ENCODE measurements at regions of chr1 and their contacts with region 1.

Region 1: DNA sequence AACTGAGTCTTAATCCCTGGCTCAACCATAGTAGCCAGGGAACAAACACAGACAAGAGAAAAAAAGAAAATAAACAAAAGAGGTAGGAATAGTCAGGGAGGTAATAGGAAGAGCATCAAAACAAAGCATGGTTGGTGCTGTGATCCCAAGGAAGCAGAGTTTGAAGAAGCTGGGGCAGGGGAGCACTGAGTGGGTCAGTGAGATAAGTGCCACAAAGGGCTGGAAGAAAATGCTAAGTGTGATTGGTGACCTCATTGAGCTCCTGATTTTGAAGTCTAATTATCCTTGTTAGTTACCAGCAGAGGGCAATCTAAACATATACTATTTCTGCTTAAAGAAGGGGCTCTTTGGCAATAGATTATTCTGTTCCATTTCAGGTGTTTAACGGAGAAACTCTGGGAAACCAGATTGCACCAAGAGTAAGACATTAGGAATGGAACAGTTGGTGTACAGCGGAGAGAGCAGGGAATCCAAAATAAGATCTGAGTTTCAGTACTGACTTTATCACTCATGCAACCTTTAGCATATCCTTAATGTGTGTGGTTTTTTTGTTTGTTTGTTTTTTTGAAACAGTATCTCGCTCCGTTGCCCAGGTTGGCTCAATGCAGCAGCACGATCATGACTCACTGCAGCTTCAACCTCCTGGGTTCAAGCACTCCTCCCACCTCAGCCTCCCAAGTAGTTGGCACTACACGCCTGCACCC is 30.7 kb upstream of the KIAA1614 start:
- DNase-seq: peak; percentile 63
- H3K4me3 ChIP-seq: no peak overlapping the region
- H3K27ac ChIP-seq: no peak overlapping the region
- H3K4me1 ChIP-seq: no peaks in the 10 kb centered on the region
- H3K27me3 ChIP-seq: no peaks in the 10 kb centered on the region
- CTCF ChIP-seq: peak; percentile 55

Region 2: DNA sequence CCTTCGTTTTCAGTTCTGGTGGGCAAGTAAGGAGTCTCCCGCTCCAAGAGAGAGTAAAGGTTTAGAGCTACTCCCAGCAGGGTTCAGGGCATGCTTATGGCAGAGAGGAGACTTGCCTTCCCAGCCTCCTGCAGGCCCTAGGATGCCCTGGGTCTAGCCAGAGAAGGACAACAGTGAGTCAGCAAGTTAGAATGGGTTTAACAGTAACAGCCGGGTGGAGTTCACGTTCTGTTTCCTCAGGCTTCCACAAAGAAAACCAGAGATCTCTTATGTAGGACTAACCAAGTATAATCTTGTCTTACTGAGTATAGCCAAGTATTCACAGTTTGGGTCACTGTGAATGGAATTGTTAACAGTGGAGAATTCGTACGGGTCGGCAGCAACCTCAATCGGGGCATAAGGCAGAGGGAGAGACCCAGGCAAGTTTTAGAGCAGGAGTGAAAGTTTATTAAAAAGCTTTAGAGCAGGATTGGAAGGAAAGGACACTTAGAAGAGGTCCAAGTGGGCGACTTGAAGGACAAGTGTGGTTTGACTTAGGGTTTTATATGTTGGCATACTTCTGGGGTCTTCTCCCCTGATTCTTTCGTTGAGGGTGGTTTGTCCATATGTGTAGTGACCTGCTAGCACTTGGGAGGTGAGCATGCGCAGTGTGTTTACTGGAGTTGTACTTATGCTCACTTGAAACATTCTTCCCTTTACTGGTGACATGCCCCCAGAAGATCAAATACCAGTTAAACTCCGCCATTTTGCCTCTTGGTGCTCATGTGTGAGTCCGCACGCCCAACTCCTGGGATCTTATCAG is 318.7 kb before region 1 on chr1:
- CTCF ChIA-PET with region 1: no interaction called
- POLR2A ChIA-PET with region 1: no interaction called
- intact Hi-C with region 1: no loop called
- DNase-seq: no peak
- H3K4me3 ChIP-seq: no peak overlapping the region
- H3K27ac ChIP-seq: no peak overlapping the region
- H3K4me1 ChIP-seq: no peaks in the 10 kb centered on the region
- H3K27me3 ChIP-seq: no peaks in the 10 kb centered on the region
- CTCF ChIP-seq: no peak

Region 3: GRCh38 chr1:180636138-180636537 is 245.8 kb before region 1 on chr1:
- CTCF ChIA-PET with region 1: no interaction called
- POLR2A ChIA-PET with region 1: no interaction called
- intact Hi-C with region 1: no loop called
- DNase-seq: peak; percentile 73
- H3K4me3 ChIP-seq: no peak overlapping the region
- H3K27ac ChIP-seq: no peak overlapping the region
- H3K4me1 ChIP-seq: peaks cover 47% of the 10 kb centered on the region
- H3K27me3 ChIP-seq: no peaks in the 10 kb centered on the region
- CTCF ChIP-seq: peak; percentile 62

Region 4: GRCh38 chr1:181033799-181034451 is 152.0 kb after region 1 on chr1 and contains the start of gene MR1:
- CTCF ChIA-PET with region 1: no interaction called
- POLR2A ChIA-PET with region 1: no interaction called
- intact Hi-C with region 1: loop called (anchors 10 kb)
- DNase-seq: peak; percentile 90
- H3K4me3 ChIP-seq: peak within 1 kb of the TSS; percentile 43
- H3K27ac ChIP-seq: peak within 1 kb of the TSS; percentile 59
- H3K4me1 ChIP-seq: peaks cover 4% of the 10 kb centered on the region
- H3K27me3 ChIP-seq: no peaks in the 10 kb centered on the region
- CTCF ChIP-seq: no peak
- total RNA-seq, gene MR1: 2.6 and 2.8 TPM in 2 replicates

Region 5: DNA sequence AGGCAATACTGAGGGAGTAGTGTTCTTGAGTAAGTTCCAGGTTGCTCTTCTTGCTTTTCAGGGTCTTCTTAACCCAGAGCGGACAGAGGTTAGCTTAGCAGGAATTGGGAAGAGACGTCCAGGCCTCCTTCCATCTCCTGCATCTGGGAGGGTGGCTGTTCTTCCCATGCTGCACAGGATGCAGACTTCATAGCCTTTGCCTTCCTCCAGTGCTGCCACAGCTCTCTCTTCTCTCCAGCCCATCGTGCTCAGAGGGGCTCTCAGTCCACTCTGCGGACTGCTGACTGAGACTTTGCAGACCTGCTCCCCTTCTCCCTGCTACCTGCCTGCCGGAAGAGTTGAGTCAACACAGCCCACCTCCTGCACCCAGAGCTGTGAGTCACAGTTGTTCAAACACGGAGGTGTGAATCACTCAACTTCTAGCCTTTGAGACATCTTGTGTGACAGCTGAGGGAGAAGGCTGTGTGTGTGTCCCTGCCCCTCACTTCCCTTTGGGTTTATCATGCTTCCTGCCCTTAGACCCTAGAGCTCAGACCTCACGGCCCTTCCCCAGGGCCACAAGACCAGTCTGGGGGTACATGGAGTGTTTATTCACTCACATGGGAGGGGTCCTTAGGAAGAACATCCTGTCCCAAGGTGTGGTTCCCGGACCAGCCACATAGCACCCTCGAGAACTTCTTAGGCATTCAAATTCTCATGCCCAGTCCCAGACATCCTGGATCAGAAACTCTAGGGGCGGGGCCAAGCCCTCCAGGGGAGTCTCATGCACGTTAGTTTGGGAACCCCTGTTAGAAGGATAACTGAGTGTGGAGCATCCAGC is 443.0 kb after region 1 on chr1:
- CTCF ChIA-PET with region 1: no interaction called
- POLR2A ChIA-PET with region 1: no interaction called
- intact Hi-C with region 1: no loop called
- DNase-seq: no peak
- H3K4me3 ChIP-seq: no peak overlapping the region
- H3K27ac ChIP-seq: no peak overlapping the region
- H3K4me1 ChIP-seq: no peaks in the 10 kb centered on the region
- H3K27me3 ChIP-seq: peaks cover 50% of the 10 kb centered on the region
- CTCF ChIP-seq: no peak